Heart right ventricle (tissue), 16 donors: ENCODE measurements at regions of chr7 and their contacts with region 1.

Region 1: GRCh38 chr7:83005410-83005809 is 157.3 kb downstream of the PCLO start:
- DNase-seq: no peak
- ATAC-seq: no peak
- H3K4me3 ChIP-seq: no peak overlapping the region
- H3K27ac ChIP-seq: no peak overlapping the region
- H3K4me1 ChIP-seq: no peaks in the 10 kb centered on the region
- H3K27me3 ChIP-seq: no peaks in the 10 kb centered on the region
- CTCF ChIP-seq: no peak

Region 2: DNA sequence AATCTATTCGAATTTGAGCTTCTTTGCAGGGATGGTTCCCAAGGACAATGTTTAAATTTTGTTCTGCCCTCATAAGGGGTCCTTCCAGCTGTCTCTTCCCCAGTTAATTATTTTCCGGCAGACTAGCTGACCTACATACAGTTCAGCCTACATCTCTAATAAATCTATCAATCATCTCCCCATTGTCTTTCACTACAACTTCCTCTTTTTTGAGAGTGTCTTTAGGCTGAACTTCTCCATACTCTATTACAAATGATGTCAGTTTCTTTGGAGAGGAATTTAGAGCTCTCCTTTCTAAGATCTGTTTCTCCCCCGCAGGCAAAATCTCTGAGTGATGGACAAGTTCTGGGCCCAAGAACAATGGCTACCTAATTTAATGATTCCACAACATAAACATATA is 35.1 kb after region 1 on chr7:
- intact Hi-C with region 1: no loop called
- DNase-seq: no peak
- ATAC-seq: no peak
- H3K4me3 ChIP-seq: no peak overlapping the region
- H3K27ac ChIP-seq: no peak overlapping the region
- H3K4me1 ChIP-seq: no peaks in the 10 kb centered on the region
- H3K27me3 ChIP-seq: no peaks in the 10 kb centered on the region
- CTCF ChIP-seq: no peak

Region 3: DNA sequence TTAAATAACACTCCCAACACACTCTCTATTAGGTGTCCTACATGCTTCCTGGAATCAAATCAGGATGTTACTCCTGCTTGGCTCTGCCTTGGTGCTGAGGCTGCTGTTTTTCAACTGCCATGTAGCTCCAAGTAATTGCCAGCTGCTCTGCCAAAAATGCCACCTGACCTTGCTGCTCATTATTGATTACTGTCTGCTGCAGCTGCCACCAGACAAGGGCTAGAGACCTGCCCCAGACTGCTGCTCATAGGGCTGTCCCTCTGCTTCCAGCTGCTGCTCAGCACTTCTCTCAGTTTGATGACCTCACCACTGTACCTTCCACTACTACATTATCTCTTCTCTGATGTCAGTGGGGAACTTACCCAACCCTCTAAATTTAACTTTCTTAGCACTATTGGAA is 54.8 kb after region 1 on chr7:
- intact Hi-C with region 1: loop called in 1 of 10 experiments (anchors 10 kb)
- DNase-seq: peak in 1 of 2 donors; percentile 4
- ATAC-seq: peak in 7 of 8 donors; percentile 33 to 89 (median 79)
- H3K4me3 ChIP-seq: no peak overlapping the region
- H3K27ac ChIP-seq: no peak overlapping the region
- H3K4me1 ChIP-seq: no peaks in the 10 kb centered on the region
- H3K27me3 ChIP-seq: no peaks in the 10 kb centered on the region
- CTCF ChIP-seq: no peak